ENCODE measurements at regions of chr3 and their contacts with region 1.

Region 1: DNA sequence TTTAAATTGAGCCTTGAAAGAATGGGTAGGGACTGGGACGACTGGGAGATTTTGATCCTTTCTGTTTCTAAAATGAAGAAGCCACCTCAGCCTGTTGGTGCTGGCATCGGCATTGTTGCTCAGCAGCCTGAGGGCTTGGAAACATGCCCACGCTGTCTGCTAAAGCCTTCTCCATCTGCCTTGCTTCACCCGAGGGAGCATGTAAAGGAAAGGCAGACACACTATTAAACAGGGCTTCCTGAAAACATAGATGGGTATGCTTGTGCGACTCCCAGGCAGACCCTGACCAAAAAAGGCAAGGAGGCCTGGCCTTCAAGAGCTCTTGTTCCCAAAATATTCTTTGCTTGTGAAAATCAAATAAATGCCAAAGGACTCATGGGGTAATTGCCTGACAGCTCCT is 84.2 kb upstream of the SLC4A7 start:
- DNase-seq: peak; percentile 42 to 54
- ATAC-seq: peak in 7 of 8 donors; percentile 41 to 76 (median 58)
- H3K4me3 ChIP-seq: no peak overlapping the region
- H3K27ac ChIP-seq: peak overlapping the region in 4 of 10 donors; percentile 3 to 39 (median 27)
- H3K4me1 ChIP-seq: peaks cover 0 to 23% (median 8%) of the 10 kb centered on the region in 9 donors
- H3K27me3 ChIP-seq: no peaks in the 10 kb centered on the region
- CTCF ChIP-seq: no peak

Region 2: DNA sequence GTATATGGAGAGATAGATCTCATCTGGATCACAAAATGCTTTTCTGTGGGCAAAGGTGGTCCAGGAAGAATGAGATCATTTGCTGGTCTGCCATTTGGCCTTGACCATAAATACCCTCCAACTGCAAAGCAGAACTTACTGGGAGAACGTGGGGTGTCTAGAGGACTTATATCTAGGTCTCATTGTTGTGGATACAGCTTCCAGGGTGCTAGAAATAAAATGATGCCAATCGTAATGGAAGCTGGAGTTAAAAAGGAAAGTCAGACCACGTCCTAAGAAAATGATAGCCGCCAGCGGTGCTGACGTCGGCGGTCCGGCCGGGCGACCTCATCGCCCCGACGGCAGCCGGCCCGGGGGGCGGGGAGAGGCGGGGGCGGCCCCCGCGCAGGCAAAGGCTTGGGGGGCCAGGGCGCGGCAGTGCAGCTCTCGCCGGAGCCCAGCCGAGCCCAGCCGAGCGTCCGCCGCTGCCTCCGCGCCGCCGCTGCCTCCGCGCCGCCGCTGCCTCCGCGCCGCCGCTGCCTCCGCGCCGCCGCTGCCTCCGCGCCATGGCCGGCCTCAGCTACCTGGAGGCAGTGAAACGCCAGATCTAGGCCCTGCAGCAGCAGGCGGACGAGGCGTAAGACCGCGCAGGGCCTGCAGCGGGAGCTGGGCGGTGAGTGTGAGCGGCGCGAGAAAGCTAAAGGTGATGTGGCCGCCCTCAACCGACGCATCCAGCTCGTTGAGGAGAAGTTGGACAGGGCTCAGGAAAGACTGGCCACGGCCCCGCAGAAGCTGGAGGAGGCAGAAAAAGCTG is 64.2 kb after region 1 on chr3:
- intact Hi-C with region 1: no loop called
- DNase-seq: peak; percentile 28 to 57
- ATAC-seq: peak; percentile 64 to 93 (median 85)
- H3K4me3 ChIP-seq: peak overlapping the region; percentile 24 to 77 (median 61)
- H3K27ac ChIP-seq: peak overlapping the region; percentile 31 to 91 (median 78)
- H3K4me1 ChIP-seq: peaks cover 0 to 22% (median 0%) of the 10 kb centered on the region in 9 donors
- H3K27me3 ChIP-seq: peaks cover 0 to 3% (median 0%) of the 10 kb centered on the region in 7 donors
- CTCF ChIP-seq: no peak

Region 3: GRCh38 chr3:27681245-27681748 is 112.9 kb after region 1 on chr3:
- intact Hi-C with region 1: loop called in 1 of 10 experiments (anchors 10 kb)
- DNase-seq: peak in 1 of 2 donors; percentile 38
- ATAC-seq: peak in 7 of 8 donors; percentile 20 to 67 (median 51)
- H3K4me3 ChIP-seq: peak overlapping the region in 2 of 10 donors; percentile 19 to 26
- H3K27ac ChIP-seq: peak overlapping the region in 2 of 10 donors; percentile 48 to 51
- H3K4me1 ChIP-seq: peaks cover 0 to 13% (median 5%) of the 10 kb centered on the region in 9 donors
- H3K27me3 ChIP-seq: no peaks in the 10 kb centered on the region
- CTCF ChIP-seq: peak; percentile 31 to 71 (median 65)